PC-9 (cell line): ENCODE measurements at regions of chr12 and their contacts with region 1.

Region 1: DNA sequence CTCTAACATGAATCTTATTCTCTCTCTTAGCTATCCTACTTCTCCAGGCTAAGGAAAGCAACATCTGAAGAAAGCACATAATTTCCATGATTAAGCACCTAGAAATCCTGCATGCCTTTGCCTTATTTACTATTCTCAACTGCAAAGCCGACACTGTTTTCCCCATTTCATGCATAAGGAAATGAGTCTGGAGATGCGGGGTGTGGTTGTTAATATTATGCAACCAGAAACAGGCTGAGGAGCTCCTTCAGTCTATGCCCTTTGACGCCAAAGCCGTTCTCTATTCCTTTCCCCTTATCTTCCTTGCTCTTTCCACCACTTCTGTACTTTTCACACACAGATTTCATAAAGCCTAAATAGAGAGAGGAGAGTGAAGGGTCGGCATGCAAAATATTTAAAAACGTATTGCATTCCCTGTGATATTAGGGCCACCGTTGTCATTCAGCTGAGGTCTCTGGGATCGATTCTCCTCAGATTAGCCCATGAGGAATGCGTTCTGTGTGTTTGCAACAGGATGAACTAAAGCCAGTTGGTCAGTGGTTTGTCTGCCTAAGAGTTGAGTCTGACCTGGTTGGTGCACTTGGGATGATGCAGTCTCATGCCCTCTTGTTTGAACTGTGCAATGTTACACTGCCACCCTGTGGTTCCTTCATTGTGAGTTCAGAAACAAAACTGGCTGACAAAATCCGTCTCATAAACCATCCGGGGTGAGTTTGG is 53.1 kb upstream of the PLEKHG7 start:
- DNase-seq: peak; percentile 53 to 54
- H3K4me3 ChIP-seq: no peak overlapping the region
- H3K27ac ChIP-seq: no peak overlapping the region
- H3K4me1 ChIP-seq: peaks cover 15% of the 10 kb centered on the region
- H3K27me3 ChIP-seq: no peaks in the 10 kb centered on the region
- CTCF ChIP-seq: peak; percentile 78

Region 2: GRCh38 chr12:91361864-91362263 is 1287.8 kb before region 1 on chr12:
- CTCF ChIA-PET with region 1: no interaction called
- POLR2A ChIA-PET with region 1: no interaction called
- intact Hi-C with region 1: loop called (anchors 2 kb)
- DNase-seq: peak in 1 of 2 experiments; percentile 37
- H3K4me3 ChIP-seq: no peak overlapping the region
- H3K27ac ChIP-seq: no peak overlapping the region
- H3K4me1 ChIP-seq: no peaks in the 10 kb centered on the region; the same call in 1 of the 2 replicates
- H3K27me3 ChIP-seq: no peaks in the 10 kb centered on the region
- CTCF ChIP-seq: peak; percentile 80

Region 3: DNA sequence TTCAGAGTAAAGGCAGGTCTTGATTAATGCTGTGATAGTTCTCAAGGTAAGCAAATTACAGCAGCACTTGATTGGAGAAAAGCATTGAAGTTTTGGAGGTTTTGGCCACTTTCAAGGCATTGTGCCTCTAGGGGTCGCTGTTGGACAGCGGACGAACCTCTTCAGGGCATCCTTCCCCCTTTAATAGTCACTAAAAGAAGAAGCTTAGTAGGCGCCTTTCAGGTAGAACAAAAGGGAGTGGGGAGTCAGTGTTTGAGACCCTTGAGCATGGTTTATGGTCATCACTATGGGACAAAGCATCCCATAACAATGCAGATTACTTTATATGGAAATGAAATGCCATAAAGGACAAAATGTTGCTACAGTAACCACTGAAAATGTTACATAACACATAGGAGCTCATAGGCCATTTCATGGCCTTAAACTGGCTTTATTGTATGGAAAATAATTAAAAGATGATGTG is 1267.6 kb before region 1 on chr12:
- CTCF ChIA-PET with region 1: no interaction called
- POLR2A ChIA-PET with region 1: no interaction called
- intact Hi-C with region 1: loop called (anchors 1 kb)
- DNase-seq: peak; percentile 51 to 67
- H3K4me3 ChIP-seq: no peak overlapping the region
- H3K27ac ChIP-seq: no peak overlapping the region
- H3K4me1 ChIP-seq: peaks cover 9% of the 10 kb centered on the region
- H3K27me3 ChIP-seq: no peaks in the 10 kb centered on the region
- CTCF ChIP-seq: peak; percentile 96